Aorta (tissue), 5 donors: ENCODE measurements at regions of chr1 and their contacts with region 1.

Region 1: DNA sequence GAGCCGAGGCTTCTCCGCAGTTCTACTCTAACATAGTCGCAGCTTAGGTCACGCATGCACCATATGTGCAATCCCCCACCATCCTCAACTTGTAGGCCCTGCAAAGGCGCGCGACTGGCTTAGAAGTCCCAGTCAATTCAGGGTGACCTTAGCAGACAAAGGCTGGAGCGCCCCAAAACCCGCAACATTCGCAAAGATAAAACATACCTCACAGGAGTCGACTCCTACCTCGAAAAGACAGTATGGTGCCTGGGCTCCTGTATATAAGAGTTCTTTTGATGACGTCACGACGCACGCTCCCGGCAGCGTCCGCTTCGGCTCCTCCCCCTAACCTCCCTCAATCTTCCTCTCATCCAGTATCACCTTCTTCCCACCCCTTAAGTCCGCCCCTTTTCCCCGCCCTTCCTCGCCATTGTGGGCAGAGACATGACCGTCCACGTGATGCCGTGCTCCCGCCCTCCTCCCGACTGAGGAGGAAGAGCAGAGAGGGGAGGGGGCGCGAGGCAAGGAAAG is at the start of gene GAS5:
- DNase-seq: peak; percentile 99 to 100
- ATAC-seq: peak; percentile 98
- H3K4me3 ChIP-seq: peak within 1 kb of the TSS; percentile 66 to 84
- H3K27ac ChIP-seq: peak within 1 kb of the TSS; percentile 62 to 87
- H3K4me1 ChIP-seq: peaks cover 0 to 4% of the 10 kb centered on the region in 2 donors
- H3K27me3 ChIP-seq: no peaks in the 10 kb centered on the region
- total RNA-seq, gene GAS5: 201 to 307 TPM

Region 2: GRCh38 chr1:173451981-173452380 is 415.8 kb before region 1 on chr1:
- intact Hi-C with region 1: no loop called
- DNase-seq: no peak
- ATAC-seq: no peak
- H3K4me3 ChIP-seq: no peak overlapping the region
- H3K27ac ChIP-seq: no peak overlapping the region
- H3K4me1 ChIP-seq: no peaks in the 10 kb centered on the region
- H3K27me3 ChIP-seq: no peaks in the 10 kb centered on the region

Region 3: DNA sequence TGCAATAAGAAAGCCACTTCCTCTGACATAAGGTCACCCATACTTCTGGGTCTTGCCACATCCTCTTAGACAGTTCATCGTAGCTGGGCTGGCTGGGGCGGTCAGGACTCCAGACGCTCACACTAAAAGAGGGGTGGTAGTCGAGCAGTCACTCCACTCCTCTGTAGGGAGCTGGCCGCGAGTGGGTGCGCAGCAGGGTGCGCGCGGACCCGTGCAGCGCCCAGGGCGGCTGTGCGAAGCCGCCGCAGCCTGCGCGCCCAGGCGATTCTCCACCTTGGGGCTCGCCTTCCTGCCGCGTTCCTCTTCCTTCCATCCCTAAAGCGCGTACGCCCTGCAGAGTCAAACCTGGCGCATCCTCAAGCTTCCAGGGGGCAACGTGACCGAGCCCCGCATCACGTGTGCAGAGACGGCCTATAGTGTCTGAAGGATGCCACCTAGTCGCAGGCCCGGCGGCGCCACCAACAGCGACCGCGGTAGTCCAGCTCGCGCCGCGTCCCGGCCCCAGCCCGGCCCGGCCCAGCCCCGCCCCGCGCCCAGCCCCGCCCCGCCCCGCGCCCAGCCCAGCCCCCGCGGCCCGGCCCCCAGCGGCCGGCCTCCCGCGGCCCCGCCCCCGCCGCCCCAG is 391.0 kb before region 1 on chr1:
- intact Hi-C with region 1: loop called in 1 of 2 experiments (anchors 5 kb)
- DNase-seq: peak; percentile 95 to 96
- ATAC-seq: peak; percentile 94
- H3K4me3 ChIP-seq: peak overlapping the region; percentile 4 to 83
- H3K27ac ChIP-seq: peak overlapping the region; percentile 20 to 52
- H3K4me1 ChIP-seq: no peaks in the 10 kb centered on the region
- H3K27me3 ChIP-seq: no peaks in the 10 kb centered on the region

Region 4: GRCh38 chr1:173714759-173715537 is 152.9 kb before region 1 on chr1 and contains the start of gene KLHL20:
- intact Hi-C with region 1: loop called in 1 of 2 experiments (anchors 10 kb)
- DNase-seq: peak; percentile 87 to 91
- ATAC-seq: peak; percentile 97
- H3K4me3 ChIP-seq: peak within 1 kb of the TSS; percentile 49 to 81
- H3K27ac ChIP-seq: peak within 1 kb of the TSS; percentile 61 to 88
- H3K4me1 ChIP-seq: no peaks in the 10 kb centered on the region
- H3K27me3 ChIP-seq: no peaks in the 10 kb centered on the region
- total RNA-seq, gene KLHL20: 28.5 to 35.2 TPM

Region 5: DNA sequence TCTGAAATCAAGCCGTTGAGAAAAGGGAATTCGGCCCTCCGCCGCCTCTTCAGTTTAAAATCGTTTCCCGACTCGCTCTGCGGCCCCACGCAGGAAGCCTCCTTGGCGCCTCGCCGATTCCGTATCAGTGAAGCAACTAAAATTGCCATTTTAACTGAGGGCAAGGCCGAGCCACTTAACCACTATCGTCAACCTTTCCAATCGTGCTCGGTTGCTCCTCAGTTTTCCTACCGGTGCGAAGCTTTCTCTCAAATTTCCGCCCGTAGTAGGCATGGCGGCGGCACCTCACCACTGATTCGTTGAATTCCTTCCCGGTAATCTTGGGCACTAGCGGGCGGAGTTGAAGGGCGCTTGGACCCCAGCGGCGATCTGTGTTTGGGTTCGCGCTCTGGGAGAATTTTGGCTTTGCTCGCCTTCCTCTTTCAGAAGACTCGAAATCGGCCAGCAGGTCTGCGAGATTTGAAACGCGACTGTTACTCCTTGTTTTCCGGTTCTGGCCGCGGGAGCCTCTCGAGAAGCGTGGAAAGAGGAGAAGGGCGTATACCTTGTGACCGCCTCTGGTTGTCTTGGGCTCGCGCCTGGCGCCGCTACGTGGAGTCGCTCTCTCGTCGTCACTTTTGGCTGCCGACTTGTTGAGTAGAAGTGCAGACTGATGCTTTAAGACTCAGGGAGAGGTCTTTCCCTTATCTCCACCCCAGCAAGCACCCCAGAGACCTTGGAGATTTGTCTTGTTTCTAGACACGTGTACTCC is 43.3 kb before region 1 on chr1 and contains the starts of genes CENPL and DARS2:
- intact Hi-C with region 1: loop called in 1 of 2 experiments (anchors 2 kb)
- DNase-seq: peak; percentile 98
- ATAC-seq: peak; percentile 100
- H3K4me3 ChIP-seq: peak within 1 kb of the TSS; percentile 53 to 98
- H3K27ac ChIP-seq: peak within 1 kb of the TSS; percentile 46 to 92
- H3K4me1 ChIP-seq: peaks cover 0 to 2% of the 10 kb centered on the region in 2 donors
- H3K27me3 ChIP-seq: no peaks in the 10 kb centered on the region
- total RNA-seq, gene CENPL: 4.5 to 4.8 TPM
- total RNA-seq, gene DARS2: 8.6 to 10.0 TPM

Region 6: GRCh38 chr1:173886746-173887611 is 19.2 kb after region 1 on chr1:
- intact Hi-C with region 1: no loop called
- DNase-seq: no peak
- ATAC-seq: no peak
- H3K4me3 ChIP-seq: no peak overlapping the region
- H3K27ac ChIP-seq: no peak overlapping the region
- H3K4me1 ChIP-seq: no peaks in the 10 kb centered on the region
- H3K27me3 ChIP-seq: no peaks in the 10 kb centered on the region

Region 7: DNA sequence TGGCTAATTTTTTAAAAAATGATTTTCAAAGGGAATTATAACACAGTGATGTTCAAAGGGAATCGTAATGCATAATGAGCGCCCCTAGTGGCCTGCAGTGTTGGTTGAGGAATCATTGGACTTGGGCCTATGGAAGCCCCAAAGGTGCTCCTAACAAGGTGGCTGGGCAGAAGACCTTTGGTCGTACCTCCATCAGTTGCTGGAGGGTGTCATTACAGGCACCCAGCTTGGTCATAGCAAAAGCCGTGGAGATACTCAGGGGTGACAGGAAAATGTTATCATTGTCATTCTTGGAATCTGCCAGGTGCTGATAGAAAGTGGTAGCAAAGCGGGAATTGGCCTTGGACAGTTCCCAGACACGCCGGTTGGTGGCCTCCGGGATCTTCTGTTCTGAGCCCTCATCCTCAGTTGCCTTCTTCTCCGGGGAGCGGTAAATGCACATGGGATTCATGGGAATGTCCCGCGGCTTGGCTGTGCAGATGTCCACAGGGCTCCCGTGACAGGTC is 46.6 kb after region 1 on chr1:
- intact Hi-C with region 1: no loop called
- DNase-seq: no peak
- ATAC-seq: no peak
- H3K4me3 ChIP-seq: no peak overlapping the region
- H3K27ac ChIP-seq: no peak overlapping the region
- H3K4me1 ChIP-seq: no peaks in the 10 kb centered on the region
- H3K27me3 ChIP-seq: no peaks in the 10 kb centered on the region

Region 8: GRCh38 chr1:174022080-174022975 is 154.5 kb after region 1 on chr1 and contains the start of gene RC3H1:
- intact Hi-C with region 1: loop called in 1 of 2 experiments (anchors 5 kb)
- DNase-seq: peak; percentile 93 to 97
- ATAC-seq: peak; percentile 98
- H3K4me3 ChIP-seq: peak within 1 kb of the TSS; percentile 66 to 85
- H3K27ac ChIP-seq: peak within 1 kb of the TSS; percentile 92 to 97
- H3K4me1 ChIP-seq: peaks cover 2 to 4% of the 10 kb centered on the region in 2 donors
- H3K27me3 ChIP-seq: no peaks in the 10 kb centered on the region
- total RNA-seq, gene RC3H1: 33.9 to 51.7 TPM